K562 (cell line): ENCODE measurements at regions of chr1 and their contacts with region 1.

Region 1: GRCh38 chr1:243343970-243344937 is 88.4 kb downstream of the SDCCAG8 start:
- DNase-seq: peak; percentile 53 to 61 (median 56)
- ATAC-seq: peak; percentile 71
- H3K4me3 ChIP-seq: no peak overlapping the region
- H3K27ac ChIP-seq: no peak overlapping the region
- H3K4me1 ChIP-seq: no peaks in the 10 kb centered on the region
- H3K27me3 ChIP-seq: no peaks in the 10 kb centered on the region
- CTCF ChIP-seq: peak; percentile 58 to 86 (median 66); a peak in 5 of 6 replicates
- EP300 ChIP-seq: no peak
- POLR2A ChIP-seq: no peak
- RAD21 ChIP-seq: peak; percentile 85 to 88

Region 2: DNA sequence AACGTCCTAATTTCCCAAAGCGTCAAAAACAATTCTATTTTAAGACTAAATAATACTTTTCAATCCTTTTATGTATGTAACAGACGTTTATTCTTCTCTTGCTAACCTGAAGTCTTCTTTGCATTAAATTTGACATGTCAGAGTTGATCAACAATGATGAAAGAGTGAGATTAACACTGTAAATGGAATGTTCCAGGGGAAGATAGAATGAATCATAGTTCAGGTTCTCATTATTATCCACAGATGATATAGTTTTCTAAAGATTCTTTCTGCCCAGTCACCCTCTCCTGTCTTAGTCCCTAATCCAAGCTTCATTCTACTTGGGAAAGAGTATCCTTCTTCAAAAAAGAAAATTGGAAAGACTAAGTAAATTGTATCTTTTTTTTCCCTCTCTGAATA is 49.5 kb before region 1 on chr1:
- CTCF ChIA-PET with region 1: no interaction called
- POLR2A ChIA-PET with region 1: no interaction called
- in situ Hi-C with region 1: no loop called
- intact Hi-C with region 1: no loop called
- DNase-seq: no peak
- ATAC-seq: no peak
- H3K4me3 ChIP-seq: no peak overlapping the region
- H3K27ac ChIP-seq: no peak overlapping the region
- H3K4me1 ChIP-seq: no peaks in the 10 kb centered on the region
- H3K27me3 ChIP-seq: no peaks in the 10 kb centered on the region
- CTCF ChIP-seq: no peak
- EP300 ChIP-seq: no peak
- POLR2A ChIP-seq: no peak
- RAD21 ChIP-seq: no peak

Region 3: DNA sequence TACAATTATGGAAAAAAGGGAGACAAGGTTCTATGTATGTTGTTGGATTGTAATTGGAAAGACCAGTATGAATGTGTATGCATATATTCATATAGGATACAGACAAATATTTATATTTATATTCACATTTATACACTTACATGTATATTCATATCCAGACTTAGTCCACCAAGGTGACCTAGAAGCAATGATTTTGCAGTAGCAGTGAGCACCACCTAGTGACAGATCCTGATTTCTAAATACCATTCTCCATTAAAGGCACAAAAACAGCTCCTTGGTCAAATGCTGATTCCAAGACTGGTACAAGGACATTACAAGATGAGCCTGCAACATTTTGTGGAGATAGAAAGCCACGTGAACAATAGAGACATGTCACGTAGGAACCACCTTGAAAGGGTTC is 65.0 kb after region 1 on chr1:
- CTCF ChIA-PET with region 1: interaction called, 6 read pairs
- POLR2A ChIA-PET with region 1: no interaction called
- in situ Hi-C with region 1: no loop called
- intact Hi-C with region 1: loop called (anchors 2 kb)
- DNase-seq: peak in 2 of 4 experiments; percentile 17 to 41
- ATAC-seq: peak; percentile 75
- H3K4me3 ChIP-seq: no peak overlapping the region
- H3K27ac ChIP-seq: no peak overlapping the region
- H3K4me1 ChIP-seq: no peaks in the 10 kb centered on the region; a peak in 2 of 5 replicates
- H3K27me3 ChIP-seq: no peaks in the 10 kb centered on the region
- CTCF ChIP-seq: peak; percentile 12 to 44 (median 44); a peak in 4 of 6 replicates
- EP300 ChIP-seq: no peak
- POLR2A ChIP-seq: no peak
- RAD21 ChIP-seq: peak in 1 of 2 experiments; percentile 46; a peak in 1 of 4 replicates

Region 4: DNA sequence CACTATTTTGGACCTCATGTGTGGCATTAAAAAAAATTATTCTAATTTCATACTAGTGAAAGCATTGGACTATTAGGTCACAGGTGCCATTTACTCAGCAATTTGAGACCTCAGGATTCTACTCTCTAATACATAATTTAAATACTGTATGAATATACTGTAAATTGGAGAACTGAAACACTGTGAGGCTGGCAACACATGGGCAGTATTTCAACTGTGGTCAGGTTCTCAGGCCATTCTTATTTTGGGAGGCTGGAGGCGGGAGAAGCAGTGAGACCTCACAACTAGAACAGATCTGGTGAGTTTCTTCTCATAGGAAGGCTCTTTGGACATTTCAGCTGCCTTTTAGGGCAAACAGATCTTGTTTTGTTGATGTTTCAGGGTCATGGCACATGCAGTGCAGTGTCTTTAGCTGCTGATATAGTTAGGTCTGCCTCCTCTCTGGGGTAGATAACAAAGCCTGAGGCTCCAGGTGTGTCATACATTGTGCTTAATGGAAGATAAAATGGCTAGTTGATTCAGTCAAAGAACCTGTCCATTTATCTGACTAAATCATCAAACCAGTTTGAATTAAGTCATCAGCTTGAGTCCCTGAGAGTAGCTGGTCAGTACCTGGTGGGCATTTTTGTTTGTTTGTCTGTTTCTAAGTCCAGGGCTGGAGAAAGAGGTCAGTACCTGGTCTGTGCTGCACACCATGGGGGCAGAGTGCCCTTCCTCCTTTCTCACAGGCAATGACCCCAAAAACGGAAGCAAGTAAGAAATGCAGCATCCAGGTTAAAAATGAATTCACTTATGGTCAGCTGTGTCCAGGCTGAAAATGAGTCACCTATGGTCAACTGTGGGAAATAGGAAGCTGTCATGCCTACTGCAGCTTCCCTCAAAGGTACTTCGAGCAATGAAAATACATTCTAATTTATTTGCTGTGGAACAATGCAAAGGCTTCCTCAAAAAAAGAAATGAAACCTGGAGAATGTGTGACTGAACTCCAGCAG is 127.8 kb after region 1 on chr1:
- CTCF ChIA-PET with region 1: interaction called, 5 read pairs
- POLR2A ChIA-PET with region 1: no interaction called
- in situ Hi-C with region 1: no loop called
- intact Hi-C with region 1: loop called (anchors 2 kb)
- DNase-seq: no peak
- ATAC-seq: peak; percentile 15; the same call in 1 of the 3 replicates
- H3K4me3 ChIP-seq: no peak overlapping the region
- H3K27ac ChIP-seq: no peak overlapping the region
- H3K4me1 ChIP-seq: peaks cover 6 to 15% of the 10 kb centered on the region in 2 experiments; a peak in 2 of 5 replicates
- H3K27me3 ChIP-seq: no peaks in the 10 kb centered on the region
- CTCF ChIP-seq: no peak
- EP300 ChIP-seq: no peak
- POLR2A ChIP-seq: no peak
- RAD21 ChIP-seq: no peak

Region 5: DNA sequence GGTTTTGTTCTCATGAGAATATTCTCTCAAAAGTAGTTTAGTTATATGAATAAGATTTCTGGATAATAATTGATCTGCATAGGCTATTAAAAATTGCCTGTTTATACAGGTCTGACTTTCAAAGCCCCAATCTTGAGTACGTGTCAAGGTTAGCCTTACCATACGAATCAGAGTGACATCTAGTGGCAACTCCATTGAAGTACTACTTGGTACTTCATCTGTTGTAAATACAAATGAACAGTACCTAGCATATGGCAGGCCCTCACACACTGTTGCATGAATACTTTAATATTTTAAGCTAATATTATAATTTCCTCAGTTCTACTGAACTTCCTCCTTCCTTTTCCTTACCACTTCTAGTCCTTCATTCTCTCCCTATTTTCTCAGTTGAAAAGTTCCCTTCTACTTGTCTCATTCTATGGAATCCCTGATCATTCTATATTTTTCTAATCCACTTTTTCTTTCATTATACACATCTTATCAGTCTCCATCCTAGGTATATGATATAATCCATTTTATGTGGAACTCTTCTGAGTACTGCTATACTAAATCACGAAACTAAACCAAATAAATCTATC is 404.5 kb after region 1 on chr1:
- CTCF ChIA-PET with region 1: interaction called, 21 read pairs
- POLR2A ChIA-PET with region 1: no interaction called
- in situ Hi-C with region 1: loop called (anchors 5 kb)
- intact Hi-C with region 1: loop called (anchors 1 kb)
- DNase-seq: peak; percentile 54 to 70 (median 61)
- ATAC-seq: peak; percentile 97
- H3K4me3 ChIP-seq: no peak overlapping the region
- H3K27ac ChIP-seq: no peak overlapping the region
- H3K4me1 ChIP-seq: no peaks in the 10 kb centered on the region
- H3K27me3 ChIP-seq: no peaks in the 10 kb centered on the region
- CTCF ChIP-seq: peak; percentile 63 to 77 (median 70)
- EP300 ChIP-seq: no peak
- POLR2A ChIP-seq: no peak
- RAD21 ChIP-seq: peak; percentile 79 to 85

Region 6: DNA sequence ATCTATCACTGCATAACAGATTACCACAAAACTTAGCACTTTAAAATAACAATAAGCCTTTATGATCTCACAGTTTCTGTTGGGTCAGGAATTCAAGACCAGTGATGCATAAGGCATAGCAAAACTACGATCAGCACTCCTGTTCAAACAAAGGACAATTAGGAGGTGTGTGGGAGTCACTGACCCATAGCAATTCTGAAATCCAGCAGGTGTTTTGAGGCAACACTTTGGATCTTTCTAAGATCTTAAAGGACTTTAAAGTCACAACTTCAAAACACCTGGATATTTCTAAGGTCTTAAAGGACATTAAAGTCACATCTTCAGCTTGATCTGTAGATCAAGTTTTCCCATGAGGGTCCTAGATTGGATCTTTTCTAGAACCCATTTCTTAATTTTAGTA is 470.5 kb after region 1 on chr1:
- CTCF ChIA-PET with region 1: no interaction called
- POLR2A ChIA-PET with region 1: no interaction called
- in situ Hi-C with region 1: no loop called
- intact Hi-C with region 1: no loop called
- DNase-seq: no peak
- ATAC-seq: no peak
- H3K4me3 ChIP-seq: no peak overlapping the region
- H3K27ac ChIP-seq: no peak overlapping the region
- H3K4me1 ChIP-seq: no peaks in the 10 kb centered on the region
- H3K27me3 ChIP-seq: no peaks in the 10 kb centered on the region
- CTCF ChIP-seq: no peak
- EP300 ChIP-seq: no peak
- POLR2A ChIP-seq: no peak
- RAD21 ChIP-seq: no peak

Region 7: GRCh38 chr1:243946946-243947345 is 602.7 kb after region 1 on chr1:
- CTCF ChIA-PET with region 1: no interaction called
- POLR2A ChIA-PET with region 1: no interaction called
- in situ Hi-C with region 1: no loop called
- intact Hi-C with region 1: loop called (anchors 1 kb)
- DNase-seq: peak; percentile 34 to 56 (median 44)
- ATAC-seq: peak; percentile 91
- H3K4me3 ChIP-seq: no peak overlapping the region
- H3K27ac ChIP-seq: no peak overlapping the region
- H3K4me1 ChIP-seq: no peaks in the 10 kb centered on the region; a peak in 1 of 5 replicates
- H3K27me3 ChIP-seq: peaks cover 5 to 35% of the 10 kb centered on the region in 2 experiments; a peak in 4 of 5 replicates
- CTCF ChIP-seq: peak; percentile 56 to 69 (median 63)
- EP300 ChIP-seq: no peak
- POLR2A ChIP-seq: no peak
- RAD21 ChIP-seq: peak in 1 of 2 experiments; percentile 62; a peak in 2 of 4 replicates

Region 8: DNA sequence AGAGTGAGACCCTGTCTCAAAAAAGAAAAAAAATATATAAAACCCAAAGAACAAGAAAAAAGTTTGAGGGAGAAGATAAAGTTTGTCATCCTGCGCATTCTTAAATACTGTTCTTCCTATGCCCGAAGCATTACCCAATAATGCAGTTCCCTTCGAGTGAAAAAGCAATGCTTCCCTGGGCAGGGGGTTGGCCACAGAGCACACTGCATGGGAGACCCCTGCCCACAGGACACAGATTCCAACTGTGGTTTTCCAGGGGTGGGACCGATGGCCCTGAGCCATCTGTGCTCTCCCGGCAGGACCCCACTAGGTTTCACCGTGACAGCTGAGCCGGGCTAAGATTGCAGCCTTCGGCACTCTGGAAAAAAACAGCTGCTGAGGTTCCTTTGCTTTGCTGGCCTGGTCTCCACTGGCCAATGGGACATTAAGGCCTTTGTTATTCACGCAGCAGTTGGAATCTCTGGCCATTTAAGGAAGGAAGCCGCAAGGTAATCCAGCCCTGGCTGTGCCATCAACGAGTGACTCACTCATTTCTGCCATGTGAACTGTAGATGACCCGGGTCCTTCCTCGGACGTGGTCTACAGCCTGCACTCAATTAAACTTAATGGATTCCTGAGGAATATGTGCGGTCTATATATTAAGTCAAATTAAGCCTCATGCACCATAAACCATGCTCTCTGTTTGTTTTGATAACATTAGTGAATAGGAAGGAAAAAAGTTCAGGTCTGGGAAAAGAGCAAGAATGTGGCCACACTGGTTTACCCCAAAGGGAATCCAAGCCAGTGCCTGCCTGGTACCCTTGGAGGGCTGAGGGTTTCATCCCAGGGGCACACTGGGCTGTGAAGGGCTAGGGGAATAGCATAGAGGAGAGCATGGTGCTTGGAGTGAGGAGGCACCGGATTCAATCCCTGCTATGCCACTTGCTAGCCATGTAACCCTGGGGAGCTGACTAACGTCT is 870.0 kb after region 1 on chr1:
- CTCF ChIA-PET with region 1: no interaction called
- POLR2A ChIA-PET with region 1: no interaction called
- in situ Hi-C with region 1: no loop called
- intact Hi-C with region 1: loop called (anchors 5 kb)
- DNase-seq: no peak
- ATAC-seq: no peak
- H3K4me3 ChIP-seq: no peak overlapping the region
- H3K27ac ChIP-seq: no peak overlapping the region
- H3K4me1 ChIP-seq: peaks cover 0 to 5% of the 10 kb centered on the region in 2 experiments; a peak in 1 of 5 replicates
- H3K27me3 ChIP-seq: peaks cover 9 to 44% of the 10 kb centered on the region in 2 experiments; a peak in 3 of 5 replicates
- CTCF ChIP-seq: no peak
- EP300 ChIP-seq: no peak
- POLR2A ChIP-seq: no peak
- RAD21 ChIP-seq: no peak